CD8-positive, alpha-beta T cell (primary cell): ENCODE measurements at regions of chr13 and their contacts with region 1.

Region 1: GRCh38 chr13:30739761-30740642 is 4.7 kb downstream of the ALOX5AP start:
- DNase-seq: peak in 8 of 9 experiments; percentile 34 to 87 (median 62)
- ATAC-seq: peak; percentile 54
- H3K4me3 ChIP-seq: peak overlapping the region; percentile 25 to 33
- H3K4me3 Mint-ChIP-seq: peak overlapping the region; percentile 73
- H3K27ac ChIP-seq: peak overlapping the region; percentile 28 to 68
- H3K27ac Mint-ChIP-seq: peak overlapping the region; percentile 82
- H3K4me1 ChIP-seq: peaks cover 73% of the 10 kb centered on the region
- H3K4me1 Mint-ChIP-seq: peaks cover 83% of the 10 kb centered on the region
- H3K27me3 ChIP-seq: no peaks in the 10 kb centered on the region
- H3K27me3 Mint-ChIP-seq: no peaks in the 10 kb centered on the region
- CTCF ChIP-seq: no peak

Region 2: GRCh38 chr13:30142486-30143211 is 597.4 kb before region 1 on chr13:
- CTCF ChIA-PET with region 1: no interaction called
- POLR2A ChIA-PET with region 1: no interaction called
- intact Hi-C with region 1: loop called in 1 of 2 experiments (anchors 10 kb)
- DNase-seq: peak in 2 of 9 experiments; percentile 38 to 52
- ATAC-seq: peak; percentile 35
- H3K4me3 ChIP-seq: no peak overlapping the region
- H3K4me3 Mint-ChIP-seq: no peak overlapping the region
- H3K27ac ChIP-seq: peak overlapping the region in 1 of 2 experiments; percentile 35
- H3K27ac Mint-ChIP-seq: peak overlapping the region; percentile 64
- H3K4me1 ChIP-seq: peaks cover 38% of the 10 kb centered on the region
- H3K4me1 Mint-ChIP-seq: peaks cover 47% of the 10 kb centered on the region
- H3K27me3 ChIP-seq: no peaks in the 10 kb centered on the region
- H3K27me3 Mint-ChIP-seq: no peaks in the 10 kb centered on the region
- CTCF ChIP-seq: no peak

Region 3: GRCh38 chr13:30673669-30674521 is 66.1 kb before region 1 on chr13:
- CTCF ChIA-PET with region 1: no interaction called
- POLR2A ChIA-PET with region 1: interaction called, 3 read pairs
- intact Hi-C with region 1: loop called (anchors 1 kb)
- DNase-seq: peak; percentile 82 to 95 (median 87)
- ATAC-seq: peak; percentile 91
- H3K4me3 ChIP-seq: peak overlapping the region; percentile 63
- H3K4me3 Mint-ChIP-seq: peak overlapping the region; percentile 88
- H3K27ac ChIP-seq: peak overlapping the region; percentile 44 to 68
- H3K27ac Mint-ChIP-seq: peak overlapping the region; percentile 92
- H3K4me1 ChIP-seq: peaks cover 7% of the 10 kb centered on the region
- H3K4me1 Mint-ChIP-seq: peaks cover 25% of the 10 kb centered on the region
- H3K27me3 ChIP-seq: no peaks in the 10 kb centered on the region
- H3K27me3 Mint-ChIP-seq: no peaks in the 10 kb centered on the region
- CTCF ChIP-seq: no peak

Region 4: DNA sequence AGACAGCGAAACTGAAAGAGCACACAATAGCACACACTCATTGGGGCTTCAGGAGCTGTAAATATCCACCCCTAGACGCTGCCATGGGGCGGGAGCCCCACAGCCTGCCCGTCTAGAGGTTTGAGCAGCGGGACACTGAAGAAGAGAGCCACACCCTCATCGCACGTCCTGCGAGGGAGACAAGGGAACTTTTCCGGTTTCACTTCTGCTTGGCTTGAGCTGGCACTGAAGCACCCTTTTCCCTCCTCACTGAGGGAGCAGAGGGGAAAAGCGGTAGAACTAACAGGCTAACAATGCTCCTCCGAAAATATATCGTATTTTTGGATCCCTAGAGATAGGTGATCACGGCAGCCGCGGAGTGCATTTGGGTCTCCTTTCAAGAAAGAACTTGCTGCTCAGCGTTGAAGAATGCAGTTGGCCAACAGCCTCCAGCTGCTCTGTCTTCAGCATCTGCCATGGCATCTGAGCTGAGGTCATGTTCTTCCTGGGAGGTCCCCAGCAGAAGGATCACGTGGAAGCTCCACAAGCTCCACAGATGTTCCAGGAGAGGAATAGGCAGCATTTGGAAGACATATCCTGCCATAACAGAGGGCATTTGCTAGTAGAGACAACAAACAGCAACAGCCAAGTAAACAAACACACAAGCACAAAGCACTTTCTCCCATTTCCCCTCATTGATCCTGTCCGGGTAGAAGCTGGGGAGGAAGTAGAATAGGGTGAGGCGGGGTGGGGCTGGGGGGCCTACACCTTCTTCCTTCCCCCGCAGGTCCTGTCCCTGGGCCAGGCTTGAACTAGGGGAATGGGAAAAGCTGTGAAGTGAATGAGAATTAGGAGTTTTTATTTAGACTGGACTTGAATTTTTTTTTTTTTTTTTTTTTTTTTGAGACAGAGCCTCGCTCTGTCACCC is 49.5 kb before region 1 on chr13:
- CTCF ChIA-PET with region 1: interaction called, 3 read pairs
- POLR2A ChIA-PET with region 1: no interaction called
- intact Hi-C with region 1: loop called in 1 of 2 experiments (anchors 5 kb)
- DNase-seq: peak in 3 of 9 experiments; percentile 27 to 53 (median 33)
- ATAC-seq: peak; percentile 51
- H3K4me3 ChIP-seq: peak overlapping the region; percentile 13 to 20
- H3K4me3 Mint-ChIP-seq: peak overlapping the region; percentile 73
- H3K27ac ChIP-seq: no peak overlapping the region
- H3K27ac Mint-ChIP-seq: peak overlapping the region; percentile 62
- H3K4me1 ChIP-seq: peaks cover 9% of the 10 kb centered on the region
- H3K4me1 Mint-ChIP-seq: peaks cover 9% of the 10 kb centered on the region
- H3K27me3 ChIP-seq: no peaks in the 10 kb centered on the region
- H3K27me3 Mint-ChIP-seq: peaks cover 7% of the 10 kb centered on the region
- CTCF ChIP-seq: no peak

Region 5: GRCh38 chr13:30751183-30751933 is 11.4 kb after region 1 on chr13:
- CTCF ChIA-PET with region 1: interaction called, 3 read pairs
- POLR2A ChIA-PET with region 1: interaction called, 5 read pairs
- intact Hi-C with region 1: loop called in 1 of 2 experiments (anchors 2 kb)
- DNase-seq: no peak
- ATAC-seq: no peak
- H3K4me3 ChIP-seq: no peak overlapping the region
- H3K4me3 Mint-ChIP-seq: no peak overlapping the region
- H3K27ac ChIP-seq: no peak overlapping the region
- H3K27ac Mint-ChIP-seq: no peak overlapping the region
- H3K4me1 ChIP-seq: peaks cover under 1% of the 10 kb centered on the region
- H3K4me1 Mint-ChIP-seq: peaks cover 20% of the 10 kb centered on the region
- H3K27me3 ChIP-seq: no peaks in the 10 kb centered on the region
- H3K27me3 Mint-ChIP-seq: no peaks in the 10 kb centered on the region
- CTCF ChIP-seq: no peak

Region 6: DNA sequence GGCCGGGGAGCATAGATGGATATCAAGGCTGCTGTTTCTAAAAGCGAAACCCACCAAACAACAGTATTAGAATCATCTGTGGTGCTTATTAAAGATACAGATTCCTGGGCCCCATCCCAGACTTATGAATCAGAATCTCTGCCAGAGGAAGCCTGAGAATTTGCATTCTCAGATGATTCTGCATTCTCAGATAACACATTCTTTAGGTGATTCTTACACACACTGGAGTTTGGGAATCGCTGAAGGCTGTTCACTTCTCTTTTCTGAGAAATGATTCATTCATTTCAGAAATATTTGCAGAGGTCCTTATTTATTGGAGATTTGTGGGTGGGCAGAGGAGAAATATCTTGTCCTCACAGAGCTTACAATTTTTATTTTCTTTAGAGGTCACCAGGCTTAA is 19.7 kb after region 1 on chr13:
- CTCF ChIA-PET with region 1: interaction called, 4 read pairs
- POLR2A ChIA-PET with region 1: no interaction called
- intact Hi-C with region 1: loop called in 1 of 2 experiments (anchors 2 kb)
- DNase-seq: no peak
- ATAC-seq: no peak
- H3K4me3 ChIP-seq: no peak overlapping the region
- H3K4me3 Mint-ChIP-seq: no peak overlapping the region
- H3K27ac ChIP-seq: no peak overlapping the region
- H3K27ac Mint-ChIP-seq: no peak overlapping the region
- H3K4me1 ChIP-seq: no peaks in the 10 kb centered on the region
- H3K4me1 Mint-ChIP-seq: no peaks in the 10 kb centered on the region
- H3K27me3 ChIP-seq: no peaks in the 10 kb centered on the region
- H3K27me3 Mint-ChIP-seq: no peaks in the 10 kb centered on the region
- CTCF ChIP-seq: no peak